ENCODE measurements at regions of chr4 and their contacts with region 1.

Region 1: GRCh38 chr4:48269861-48270522 is 354 bp upstream of the TEC start:
- DNase-seq: peak; percentile 96 to 98 (median 98)
- ATAC-seq: peak; percentile 93
- H3K4me3 ChIP-seq: peak overlapping the region; percentile 89
- H3K27ac ChIP-seq: peak overlapping the region; percentile 92
- H3K4me1 ChIP-seq: peaks cover 17 to 41% of the 10 kb centered on the region in 2 experiments
- H3K27me3 ChIP-seq: no peaks in the 10 kb centered on the region
- CTCF ChIP-seq: peak in 2 of 3 experiments; percentile 19 to 54; a peak in 4 of 6 replicates
- EP300 ChIP-seq: no peak
- POLR2A ChIP-seq: peak; percentile 89
- RAD21 ChIP-seq: peak in 1 of 2 experiments; percentile 35; a peak in 2 of 4 replicates

Region 2: DNA sequence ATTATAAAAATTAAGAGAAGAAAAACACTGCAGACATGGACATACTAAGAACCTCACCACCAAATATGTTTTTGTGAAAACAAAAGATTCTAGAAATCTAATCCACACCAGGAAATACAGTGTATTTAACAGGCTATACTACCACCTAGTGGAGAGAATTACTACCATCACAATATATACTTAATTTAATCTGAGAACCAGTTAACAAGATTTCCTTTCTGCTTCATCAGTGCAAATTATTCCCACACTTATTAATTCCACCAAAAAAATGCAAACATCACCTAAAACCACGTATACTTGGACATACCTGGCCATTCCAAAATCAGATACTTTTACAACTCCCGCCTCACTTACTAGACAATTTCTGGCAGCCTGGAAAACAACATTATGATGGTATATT is 128.9 kb before region 1 on chr4:
- CTCF ChIA-PET with region 1: no interaction called
- POLR2A ChIA-PET with region 1: no interaction called
- in situ Hi-C with region 1: loop called (anchors 10 kb)
- intact Hi-C with region 1: no loop called
- DNase-seq: peak; percentile 21 to 41 (median 32)
- ATAC-seq: peak; percentile 91
- H3K4me3 ChIP-seq: no peak overlapping the region
- H3K27ac ChIP-seq: no peak overlapping the region
- H3K4me1 ChIP-seq: no peaks in the 10 kb centered on the region
- H3K27me3 ChIP-seq: no peaks in the 10 kb centered on the region
- CTCF ChIP-seq: peak; percentile 33 to 71 (median 41); a peak in 3 of 6 replicates
- EP300 ChIP-seq: no peak
- POLR2A ChIP-seq: no peak
- RAD21 ChIP-seq: peak; percentile 55 to 58

Region 3: GRCh38 chr4:48212165-48212564 is 57.8 kb before region 1 on chr4:
- CTCF ChIA-PET with region 1: no interaction called
- POLR2A ChIA-PET with region 1: no interaction called
- in situ Hi-C with region 1: no loop called
- intact Hi-C with region 1: loop called (anchors 2 kb)
- DNase-seq: peak; percentile 32 to 83 (median 50)
- ATAC-seq: peak; percentile 88
- H3K4me3 ChIP-seq: no peak overlapping the region
- H3K27ac ChIP-seq: peak overlapping the region; percentile 83
- H3K4me1 ChIP-seq: peaks cover 0 to 24% of the 10 kb centered on the region in 2 experiments; a peak in 4 of 5 replicates
- H3K27me3 ChIP-seq: no peaks in the 10 kb centered on the region
- CTCF ChIP-seq: 0 out of 6 replicates have a peak, but pooled peaks of 1 of the 3 experiments have one; percentile 1
- EP300 ChIP-seq: peak; percentile 84
- POLR2A ChIP-seq: no peak
- RAD21 ChIP-seq: peak; percentile 6 to 22; a peak in 2 of 4 replicates

Region 4: DNA sequence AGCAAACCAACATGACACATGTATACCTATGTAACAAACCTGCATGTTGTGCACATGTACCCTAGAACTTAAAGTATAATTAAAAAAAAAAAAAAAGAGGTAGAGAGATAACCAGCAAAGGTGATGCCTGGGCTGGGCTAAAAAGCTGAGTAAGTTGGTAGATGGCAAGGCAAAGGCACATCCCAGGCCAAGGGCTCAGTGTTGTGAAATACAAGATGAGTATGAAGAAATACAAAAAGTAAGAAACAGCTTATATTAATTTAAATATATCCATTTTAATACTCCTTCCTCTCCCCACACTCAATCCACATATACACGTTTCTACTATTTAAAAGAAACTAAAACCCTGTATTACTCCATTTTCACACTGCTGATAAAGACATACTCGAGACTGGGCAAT is 26.1 kb before region 1 on chr4:
- CTCF ChIA-PET with region 1: no interaction called
- POLR2A ChIA-PET with region 1: no interaction called
- in situ Hi-C with region 1: no loop called
- intact Hi-C with region 1: loop called (anchors 2 kb)
- DNase-seq: no peak
- ATAC-seq: no peak; the same call in 2 of the 3 replicates
- H3K4me3 ChIP-seq: no peak overlapping the region
- H3K27ac ChIP-seq: peak overlapping the region; percentile 35
- H3K4me1 ChIP-seq: peaks cover 10 to 56% of the 10 kb centered on the region in 2 experiments
- H3K27me3 ChIP-seq: no peaks in the 10 kb centered on the region
- CTCF ChIP-seq: no peak
- EP300 ChIP-seq: no peak
- POLR2A ChIP-seq: no peak
- RAD21 ChIP-seq: no peak

Region 5: GRCh38 chr4:48985976-48986653 is 716.1 kb after region 1 on chr4 and contains the start of gene CWH43:
- CTCF ChIA-PET with region 1: no interaction called
- POLR2A ChIA-PET with region 1: no interaction called
- in situ Hi-C with region 1: no loop called
- intact Hi-C with region 1: no loop called
- DNase-seq: no peak
- ATAC-seq: no peak
- H3K4me3 ChIP-seq: no peak within 1 kb of the TSS
- H3K27ac ChIP-seq: no peak within 1 kb of the TSS
- H3K4me1 ChIP-seq: peaks cover 0 to 12% of the 10 kb centered on the region in 2 experiments; a peak in 2 of 5 replicates
- H3K27me3 ChIP-seq: peaks cover 19 to 29% of the 10 kb centered on the region in 2 experiments; a peak in 4 of 5 replicates
- CTCF ChIP-seq: no peak
- EP300 ChIP-seq: no peak
- POLR2A ChIP-seq: no peak
- RAD21 ChIP-seq: no peak
- polyA plus RNA-seq, gene CWH43: not detected